Left ventricle myocardium superior (tissue), 1 donor: ENCODE measurements at regions of chr2 and their contacts with region 1.

Region 1: GRCh38 chr2:231674587-231675338 is 33.6 kb upstream of the PTMA start:
- DNase-seq: peak; percentile 82
- ATAC-seq: peak; percentile 63

Region 2: GRCh38 chr2:231387904-231388724 is 286.6 kb before region 1 on chr2:
- intact Hi-C with region 1: no loop called
- DNase-seq: peak; percentile 82
- ATAC-seq: peak; percentile 87

Region 3: DNA sequence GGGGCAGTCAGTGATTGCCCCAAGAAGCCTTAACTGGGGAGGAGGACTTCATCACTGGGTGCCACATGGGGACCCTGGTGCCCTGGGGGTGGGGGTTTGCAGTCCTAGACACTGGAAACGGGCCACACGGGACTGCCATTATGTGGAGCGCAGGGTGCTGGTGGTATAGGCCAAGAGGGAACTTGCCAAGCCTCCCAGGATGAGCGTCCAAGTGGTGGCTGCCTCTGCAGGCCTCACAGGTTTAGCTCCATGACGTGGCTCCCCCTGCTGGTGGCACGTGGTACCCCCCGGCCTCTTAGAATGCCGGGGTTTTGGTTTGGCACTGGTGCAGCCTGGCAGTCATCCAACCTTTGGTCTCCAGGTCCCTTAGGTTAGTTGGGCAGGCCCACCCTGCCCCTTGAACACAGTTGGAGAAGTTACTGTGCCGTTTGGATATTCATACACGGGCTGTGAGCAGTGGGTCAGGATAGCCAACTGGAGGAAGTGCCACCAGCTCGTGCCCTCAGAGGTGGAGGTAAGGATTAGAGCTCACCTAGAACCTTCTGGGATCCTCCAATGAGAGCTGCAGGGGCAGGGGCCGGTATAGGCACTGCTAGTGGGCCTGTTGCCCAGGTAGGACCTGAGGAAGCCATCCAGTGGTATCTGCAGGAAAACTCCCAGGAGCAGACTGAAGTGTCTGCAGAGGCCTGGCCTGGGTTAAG is 39.1 kb after region 1 on chr2:
- intact Hi-C with region 1: loop called (anchors 5 kb)
- DNase-seq: peak; percentile 94
- ATAC-seq: peak; percentile 50